ENCODE measurements at regions of chr14 and their contacts with region 1.

Region 1: GRCh38 chr14:24777678-24778077 is 143.7 kb upstream of the GZMB start:
- DNase-seq: no peak
- ATAC-seq: no peak
- H3K4me3 ChIP-seq: no peak overlapping the region
- H3K27ac ChIP-seq: no peak overlapping the region
- H3K4me1 ChIP-seq: no peaks in the 10 kb centered on the region
- H3K27me3 ChIP-seq: no peaks in the 10 kb centered on the region
- CTCF ChIP-seq: no peak
- EP300 ChIP-seq: no peak
- POLR2A ChIP-seq: no peak
- RAD21 ChIP-seq: no peak

Region 2: GRCh38 chr14:24789378-24789884 is 11.8 kb after region 1 on chr14:
- CTCF ChIA-PET with region 1: interaction called, 3 read pairs
- POLR2A ChIA-PET with region 1: no interaction called
- RAD21 ChIA-PET with region 1: no interaction called
- SMC1A ChIA-PET with region 1: interaction called, 12 read pairs
- in situ Hi-C with region 1: no loop called
- intact Hi-C with region 1: no loop called
- DNase-seq: no peak
- ATAC-seq: no peak
- H3K4me3 ChIP-seq: no peak overlapping the region
- H3K27ac ChIP-seq: no peak overlapping the region
- H3K4me1 ChIP-seq: no peaks in the 10 kb centered on the region
- H3K27me3 ChIP-seq: no peaks in the 10 kb centered on the region
- CTCF ChIP-seq: no peak
- EP300 ChIP-seq: no peak
- POLR2A ChIP-seq: no peak
- RAD21 ChIP-seq: no peak

Region 3: GRCh38 chr14:24875991-24876878 is 98.6 kb after region 1 on chr14:
- CTCF ChIA-PET with region 1: no interaction called
- POLR2A ChIA-PET with region 1: no interaction called
- RAD21 ChIA-PET with region 1: no interaction called
- SMC1A ChIA-PET with region 1: no interaction called
- in situ Hi-C with region 1: no loop called
- intact Hi-C with region 1: no loop called
- DNase-seq: no peak
- ATAC-seq: peak; percentile 38
- H3K4me3 ChIP-seq: no peak overlapping the region
- H3K27ac ChIP-seq: no peak overlapping the region
- H3K4me1 ChIP-seq: no peaks in the 10 kb centered on the region
- H3K27me3 ChIP-seq: no peaks in the 10 kb centered on the region
- CTCF ChIP-seq: no peak
- EP300 ChIP-seq: no peak
- POLR2A ChIP-seq: no peak
- RAD21 ChIP-seq: no peak

Measured in GM12878 (cell line).